CD4-positive, alpha-beta T cell (primary cell): ENCODE measurements at regions of chr7 and their contacts with region 1.

Region 1: GRCh38 chr7:66844552-66845378 is 76.3 kb upstream of the TMEM248 start:
- DNase-seq: peak; percentile 98 to 100 (median 99)
- ATAC-seq: peak; percentile 89
- H3K4me3 ChIP-seq: peak overlapping the region; percentile 99
- H3K4me3 Mint-ChIP-seq: peak overlapping the region; percentile 96
- H3K27ac ChIP-seq: peak overlapping the region; percentile 98 to 100
- H3K27ac Mint-ChIP-seq: peak overlapping the region; percentile 97
- H3K4me1 ChIP-seq: peaks cover 21% of the 10 kb centered on the region
- H3K4me1 Mint-ChIP-seq: peaks cover 24% of the 10 kb centered on the region
- H3K27me3 ChIP-seq: no peaks in the 10 kb centered on the region
- H3K27me3 Mint-ChIP-seq: peaks cover 3% of the 10 kb centered on the region
- CTCF ChIP-seq: peak; percentile 37

Region 2: GRCh38 chr7:66591799-66592596 is 252.8 kb before region 1 on chr7:
- CTCF ChIA-PET with region 1: no interaction called
- POLR2A ChIA-PET with region 1: interaction called, 3 read pairs
- intact Hi-C with region 1: loop called in 1 of 2 experiments (anchors 5 kb)
- DNase-seq: peak; percentile 76 to 96 (median 88)
- ATAC-seq: peak; percentile 98
- H3K4me3 ChIP-seq: peak overlapping the region; percentile 97
- H3K4me3 Mint-ChIP-seq: peak overlapping the region; percentile 99
- H3K27ac ChIP-seq: peak overlapping the region; percentile 60 to 80
- H3K27ac Mint-ChIP-seq: peak overlapping the region; percentile 99
- H3K4me1 ChIP-seq: peaks cover 43% of the 10 kb centered on the region
- H3K4me1 Mint-ChIP-seq: peaks cover 47% of the 10 kb centered on the region
- H3K27me3 ChIP-seq: no peaks in the 10 kb centered on the region
- H3K27me3 Mint-ChIP-seq: no peaks in the 10 kb centered on the region
- CTCF ChIP-seq: no peak

Region 3: GRCh38 chr7:66681491-66682349 is 163.0 kb before region 1 on chr7:
- CTCF ChIA-PET with region 1: no interaction called
- POLR2A ChIA-PET with region 1: interaction called, 11 read pairs
- intact Hi-C with region 1: loop called in 1 of 2 experiments (anchors 5 kb)
- DNase-seq: peak; percentile 87 to 98 (median 95)
- ATAC-seq: peak; percentile 95
- H3K4me3 ChIP-seq: peak overlapping the region; percentile 95
- H3K4me3 Mint-ChIP-seq: peak overlapping the region; percentile 99
- H3K27ac ChIP-seq: peak overlapping the region; percentile 96 to 99
- H3K27ac Mint-ChIP-seq: peak overlapping the region; percentile 98
- H3K4me1 ChIP-seq: peaks cover 29% of the 10 kb centered on the region
- H3K4me1 Mint-ChIP-seq: peaks cover 40% of the 10 kb centered on the region
- H3K27me3 ChIP-seq: no peaks in the 10 kb centered on the region
- H3K27me3 Mint-ChIP-seq: no peaks in the 10 kb centered on the region
- CTCF ChIP-seq: no peak

Region 4: GRCh38 chr7:66905689-66906088 is 60.9 kb after region 1 on chr7:
- CTCF ChIA-PET with region 1: no interaction called
- POLR2A ChIA-PET with region 1: interaction called, 10 read pairs
- intact Hi-C with region 1: no loop called
- DNase-seq: no peak
- ATAC-seq: no peak
- H3K4me3 ChIP-seq: no peak overlapping the region
- H3K4me3 Mint-ChIP-seq: no peak overlapping the region
- H3K27ac ChIP-seq: no peak overlapping the region
- H3K27ac Mint-ChIP-seq: no peak overlapping the region
- H3K4me1 ChIP-seq: no peaks in the 10 kb centered on the region
- H3K4me1 Mint-ChIP-seq: no peaks in the 10 kb centered on the region
- H3K27me3 ChIP-seq: no peaks in the 10 kb centered on the region
- H3K27me3 Mint-ChIP-seq: no peaks in the 10 kb centered on the region
- CTCF ChIP-seq: no peak

Region 5: DNA sequence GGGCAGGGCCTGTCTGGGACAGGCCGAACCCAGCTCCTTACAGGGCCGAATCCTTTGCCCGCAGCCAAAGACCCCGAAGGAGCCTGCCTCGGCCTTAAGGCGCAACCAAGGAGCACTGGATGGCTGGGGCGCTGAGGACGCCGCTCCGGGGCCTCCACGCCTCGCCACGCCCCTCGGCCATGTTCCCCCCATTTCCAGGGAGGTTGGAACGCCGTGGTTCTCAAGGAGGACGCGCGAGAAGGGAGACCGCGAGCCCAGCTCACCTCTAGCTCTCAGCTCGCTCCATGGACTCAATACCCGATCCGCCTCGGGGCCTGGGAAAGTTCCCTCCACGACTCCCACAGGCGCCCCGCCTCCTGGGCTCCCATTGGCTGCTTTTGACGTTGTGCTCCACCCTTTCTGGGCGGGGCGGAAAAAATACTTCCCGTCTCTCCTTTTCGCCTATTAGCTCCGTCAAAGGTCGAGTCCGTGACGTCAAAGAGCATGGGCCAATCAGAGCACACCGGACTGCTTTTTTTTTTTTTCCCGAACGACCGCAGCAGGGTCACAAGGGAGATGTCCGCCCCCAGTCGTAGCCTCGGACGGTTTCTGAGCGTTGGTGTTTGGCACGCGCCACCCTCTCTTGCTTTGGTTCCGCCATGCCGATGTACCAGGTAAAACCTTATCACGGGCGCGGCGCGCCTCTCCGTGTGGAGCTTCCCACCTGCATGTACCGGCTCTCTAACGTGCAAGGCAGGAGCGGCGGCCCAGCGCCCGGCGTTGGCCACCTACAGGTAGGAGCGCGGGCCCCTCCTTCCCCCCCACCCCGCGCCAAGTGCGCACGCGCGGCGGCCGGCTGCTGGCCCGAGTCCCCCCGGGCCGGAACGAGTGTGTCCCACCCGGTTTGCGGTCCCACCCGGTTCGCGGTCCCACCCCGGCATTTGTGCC is 457.6 kb after region 1 on chr7:
- CTCF ChIA-PET with region 1: no interaction called
- POLR2A ChIA-PET with region 1: interaction called, 6 read pairs
- intact Hi-C with region 1: loop called in 1 of 2 experiments (anchors 10 kb)
- DNase-seq: peak; percentile 90 to 99 (median 96)
- ATAC-seq: peak; percentile 82
- H3K4me3 ChIP-seq: peak overlapping the region; percentile 70
- H3K4me3 Mint-ChIP-seq: peak overlapping the region; percentile 96
- H3K27ac ChIP-seq: peak overlapping the region; percentile 68 to 89
- H3K27ac Mint-ChIP-seq: peak overlapping the region; percentile 99
- H3K4me1 ChIP-seq: peaks cover 24% of the 10 kb centered on the region
- H3K4me1 Mint-ChIP-seq: peaks cover 23% of the 10 kb centered on the region
- H3K27me3 ChIP-seq: no peaks in the 10 kb centered on the region
- H3K27me3 Mint-ChIP-seq: no peaks in the 10 kb centered on the region
- CTCF ChIP-seq: no peak